ENCODE measurements at regions of chr18 and their contacts with region 1.

Region 1: DNA sequence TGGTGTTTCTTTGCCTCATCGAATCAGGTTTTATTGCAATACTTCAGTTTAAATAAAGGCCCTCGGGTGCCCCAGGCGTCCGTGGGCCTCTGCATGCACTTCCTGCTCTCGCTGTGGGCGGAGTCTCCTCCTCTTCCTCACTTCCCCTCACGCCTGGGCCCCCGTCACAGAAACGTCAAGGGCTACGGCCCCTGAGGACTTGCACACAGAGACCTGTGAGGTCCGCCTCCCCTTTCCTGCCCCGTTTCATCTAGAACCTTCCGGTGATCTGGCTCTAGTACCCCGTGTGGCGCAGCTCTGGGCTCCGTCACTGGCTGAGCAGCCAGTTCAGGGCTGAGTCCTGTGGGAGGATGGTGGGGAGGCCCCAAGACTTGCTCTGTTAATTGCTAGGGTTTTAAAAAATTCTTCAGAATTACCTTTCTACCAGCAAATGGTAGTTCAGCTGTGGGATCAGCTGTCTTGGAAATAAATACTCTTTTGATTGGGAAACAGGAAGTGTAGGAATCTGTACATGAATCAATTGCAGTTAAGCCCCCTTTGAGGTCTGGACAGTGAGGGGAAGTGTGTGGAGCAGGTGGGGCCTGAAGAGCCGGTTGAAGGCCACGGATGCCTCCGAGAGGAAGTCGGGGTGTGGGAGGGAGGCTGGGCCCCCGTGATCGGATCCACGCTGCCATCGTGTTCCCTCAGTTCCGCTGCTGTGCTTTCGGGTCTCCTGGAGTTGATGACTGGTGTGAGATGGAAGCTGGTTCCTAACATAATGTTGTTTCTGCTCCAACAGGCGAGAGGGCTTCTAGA is 10.2 kb downstream of the NFATC1 start:
- DNase-seq: peak; percentile 91 to 98 (median 95)
- H3K4me3 ChIP-seq: peak overlapping the region; percentile 49 to 60
- H3K4me3 Mint-ChIP-seq: peak overlapping the region; percentile 83 to 95 (median 92)
- H3K27ac ChIP-seq: peak overlapping the region; percentile 87
- H3K27ac Mint-ChIP-seq: peak overlapping the region in 6 of 7 donors; percentile 95 to 100 (median 98)
- H3K4me1 ChIP-seq: peaks cover 62% of the 10 kb centered on the region
- H3K4me1 Mint-ChIP-seq: peaks cover 40 to 66% (median 55%) of the 10 kb centered on the region in 4 donors
- H3K27me3 ChIP-seq: no peaks in the 10 kb centered on the region
- H3K27me3 Mint-ChIP-seq: no peaks in the 10 kb centered on the region

Region 2: DNA sequence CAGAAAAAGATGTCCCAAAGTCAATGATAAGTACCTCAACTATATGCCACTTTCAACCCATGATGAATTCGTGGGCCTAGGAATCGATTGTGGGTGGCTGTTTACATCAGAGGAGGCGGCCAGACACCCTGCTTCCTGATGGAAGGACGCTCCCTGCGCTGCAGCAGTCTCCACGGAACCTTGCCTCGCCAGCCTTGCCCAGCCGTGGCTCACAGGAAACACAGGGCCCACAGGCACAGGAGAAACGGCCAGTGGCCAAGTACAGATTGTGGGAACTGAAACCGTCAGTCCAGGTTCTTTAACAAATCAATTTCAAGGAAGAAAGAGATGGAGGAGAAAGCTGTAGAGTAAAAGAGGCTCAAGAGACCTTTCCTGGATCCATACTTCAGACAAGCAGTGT is 111.7 kb before region 1 on chr18:
- CTCF ChIA-PET with region 1: no interaction called
- POLR2A ChIA-PET with region 1: no interaction called
- intact Hi-C with region 1: no loop called
- DNase-seq: no peak
- H3K4me3 ChIP-seq: no peak overlapping the region
- H3K4me3 Mint-ChIP-seq: peak overlapping the region in 1 of 8 donors; percentile 43
- H3K27ac ChIP-seq: no peak overlapping the region
- H3K27ac Mint-ChIP-seq: no peak overlapping the region
- H3K4me1 ChIP-seq: peaks cover 4% of the 10 kb centered on the region
- H3K4me1 Mint-ChIP-seq: peaks cover 6 to 19% (median 9%) of the 10 kb centered on the region in 4 donors
- H3K27me3 ChIP-seq: no peaks in the 10 kb centered on the region
- H3K27me3 Mint-ChIP-seq: no peaks in the 10 kb centered on the region

Region 3: GRCh38 chr18:79679111-79679872 is 273.3 kb after region 1 on chr18 and contains the start of gene CTDP1:
- CTCF ChIA-PET with region 1: no interaction called
- POLR2A ChIA-PET with region 1: interaction called, 5 read pairs
- intact Hi-C with region 1: loop called (anchors 2 kb)
- DNase-seq: peak; percentile 98 to 99 (median 99)
- H3K4me3 ChIP-seq: peak within 1 kb of the TSS; percentile 75 to 88
- H3K4me3 Mint-ChIP-seq: peak within 1 kb of the TSS; percentile 95 to 100 (median 98)
- H3K27ac ChIP-seq: peak within 1 kb of the TSS; percentile 98
- H3K27ac Mint-ChIP-seq: peak within 1 kb of the TSS; percentile 99 to 100 (median 99)
- H3K4me1 ChIP-seq: peaks cover 53% of the 10 kb centered on the region
- H3K4me1 Mint-ChIP-seq: peaks cover 40 to 64% (median 54%) of the 10 kb centered on the region in 4 donors
- H3K27me3 ChIP-seq: no peaks in the 10 kb centered on the region
- H3K27me3 Mint-ChIP-seq: no peaks in the 10 kb centered on the region
- total RNA-seq, gene CTDP1: 42.6 to 44.5 TPM